Activated CD4-positive, alpha-beta memory T cell treated with anti-CD3 and anti-CD28 coated beads, Interleukin-2, amount 10 ng/mL, durations not matched to agents 7 days and 5 days (primary cell): ENCODE measurements at regions of chr6 and their contacts with region 1.

Region 1: DNA sequence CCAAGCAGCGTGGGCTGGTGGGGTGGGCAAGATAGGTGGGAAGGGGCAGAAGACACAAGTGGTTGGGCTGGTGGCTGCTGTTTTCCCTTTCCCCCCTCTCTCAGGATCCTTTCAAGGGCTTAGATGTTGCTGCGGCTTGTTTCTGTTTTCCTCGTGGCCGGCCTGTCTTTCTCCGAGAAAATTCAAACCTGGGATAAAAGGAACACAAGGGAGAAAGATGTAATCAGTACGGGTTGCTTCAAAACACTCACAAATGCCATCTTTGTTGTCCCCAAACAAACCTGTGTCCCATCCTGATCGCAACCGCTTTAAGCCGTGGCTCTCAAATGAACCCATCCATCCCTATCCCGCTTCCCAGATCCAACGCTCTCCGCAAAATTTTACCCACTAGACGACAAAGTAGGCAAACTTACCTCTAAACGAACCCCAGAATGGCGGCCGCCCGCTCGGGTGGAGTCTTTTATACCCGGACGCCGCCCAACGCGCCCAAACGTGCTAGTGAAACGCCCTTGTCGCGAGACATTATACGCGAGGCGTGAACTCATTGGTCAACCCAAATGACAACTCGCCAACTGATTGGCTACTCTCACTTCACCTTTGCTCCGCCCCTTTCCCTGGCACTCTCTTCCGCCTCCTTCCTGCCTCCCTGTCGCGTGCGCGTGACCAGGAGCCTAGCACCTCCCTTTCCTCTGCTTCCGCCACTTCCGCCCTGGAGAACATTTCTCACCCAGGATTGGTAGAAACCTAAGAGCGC is at the start of gene PPP1R10:
- DNase-seq: peak; percentile 99
- H3K4me3 Mint-ChIP-seq: peak within 1 kb of the TSS; percentile 91
- H3K27ac Mint-ChIP-seq: peak within 1 kb of the TSS; percentile 96
- H3K4me1 Mint-ChIP-seq: peaks cover 45% of the 10 kb centered on the region
- H3K27me3 Mint-ChIP-seq: no peaks in the 10 kb centered on the region
- total RNA-seq, gene PPP1R10: 96.1 to 103 TPM

Region 2: GRCh38 chr6:30360139-30360538 is 256.8 kb before region 1 on chr6:
- CTCF ChIA-PET with region 1: interaction called, 10 read pairs
- POLR2A ChIA-PET with region 1: no interaction called
- DNase-seq: no peak
- H3K4me3 Mint-ChIP-seq: no peak overlapping the region
- H3K27ac Mint-ChIP-seq: no peak overlapping the region
- H3K4me1 Mint-ChIP-seq: peaks cover 6% of the 10 kb centered on the region
- H3K27me3 Mint-ChIP-seq: peaks cover 77% of the 10 kb centered on the region

Region 3: GRCh38 chr6:30465595-30466306 is 151.2 kb before region 1 on chr6:
- CTCF ChIA-PET with region 1: no interaction called
- POLR2A ChIA-PET with region 1: no interaction called
- DNase-seq: no peak
- H3K4me3 Mint-ChIP-seq: no peak overlapping the region
- H3K27ac Mint-ChIP-seq: no peak overlapping the region
- H3K4me1 Mint-ChIP-seq: peaks cover 37% of the 10 kb centered on the region
- H3K27me3 Mint-ChIP-seq: peaks cover 85% of the 10 kb centered on the region

Region 4: DNA sequence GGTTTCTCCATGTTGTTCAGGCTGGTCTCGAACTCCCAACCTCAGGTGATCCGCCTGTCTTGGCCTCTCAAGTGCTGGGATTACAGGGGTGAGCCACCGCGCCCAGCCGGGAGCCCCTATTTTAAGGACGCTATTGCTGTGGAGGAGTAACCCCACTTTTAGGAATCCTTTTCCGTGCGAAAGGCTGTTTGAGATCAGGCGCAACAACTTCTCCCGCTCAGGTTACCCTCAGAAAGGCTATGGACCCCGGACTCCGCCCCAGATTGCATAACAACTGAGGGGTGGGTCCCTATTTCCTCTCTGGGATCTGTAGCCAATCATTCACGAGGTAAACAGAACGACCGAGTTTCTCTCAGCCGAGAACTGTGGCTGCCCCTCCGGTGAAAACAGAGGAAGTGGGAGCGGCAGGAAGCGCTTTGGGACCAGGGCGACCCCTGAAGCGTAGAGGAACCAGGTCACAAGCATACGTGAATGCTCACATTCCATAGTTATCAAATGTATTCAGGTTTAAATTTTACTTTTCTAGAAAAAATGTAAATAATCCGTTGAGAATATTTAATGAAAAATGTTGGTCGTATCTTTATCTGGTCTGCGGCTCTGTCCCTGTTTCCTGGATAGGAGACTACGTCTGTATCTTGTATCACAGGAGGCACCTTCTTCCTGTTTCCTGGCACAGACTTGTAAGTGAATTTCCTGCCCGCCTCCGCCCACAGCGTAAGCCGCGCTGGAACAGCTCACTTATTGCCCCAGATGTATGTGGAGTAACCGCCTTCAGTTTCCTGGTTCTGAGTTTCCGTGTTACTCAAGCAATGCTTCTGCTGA is 100.8 kb before region 1 on chr6:
- CTCF ChIA-PET with region 1: no interaction called
- POLR2A ChIA-PET with region 1: no interaction called
- DNase-seq: peak; percentile 94
- H3K4me3 Mint-ChIP-seq: peak overlapping the region; percentile 66
- H3K27ac Mint-ChIP-seq: peak overlapping the region; percentile 96
- H3K4me1 Mint-ChIP-seq: peaks cover 43% of the 10 kb centered on the region
- H3K27me3 Mint-ChIP-seq: no peaks in the 10 kb centered on the region

Region 5: DNA sequence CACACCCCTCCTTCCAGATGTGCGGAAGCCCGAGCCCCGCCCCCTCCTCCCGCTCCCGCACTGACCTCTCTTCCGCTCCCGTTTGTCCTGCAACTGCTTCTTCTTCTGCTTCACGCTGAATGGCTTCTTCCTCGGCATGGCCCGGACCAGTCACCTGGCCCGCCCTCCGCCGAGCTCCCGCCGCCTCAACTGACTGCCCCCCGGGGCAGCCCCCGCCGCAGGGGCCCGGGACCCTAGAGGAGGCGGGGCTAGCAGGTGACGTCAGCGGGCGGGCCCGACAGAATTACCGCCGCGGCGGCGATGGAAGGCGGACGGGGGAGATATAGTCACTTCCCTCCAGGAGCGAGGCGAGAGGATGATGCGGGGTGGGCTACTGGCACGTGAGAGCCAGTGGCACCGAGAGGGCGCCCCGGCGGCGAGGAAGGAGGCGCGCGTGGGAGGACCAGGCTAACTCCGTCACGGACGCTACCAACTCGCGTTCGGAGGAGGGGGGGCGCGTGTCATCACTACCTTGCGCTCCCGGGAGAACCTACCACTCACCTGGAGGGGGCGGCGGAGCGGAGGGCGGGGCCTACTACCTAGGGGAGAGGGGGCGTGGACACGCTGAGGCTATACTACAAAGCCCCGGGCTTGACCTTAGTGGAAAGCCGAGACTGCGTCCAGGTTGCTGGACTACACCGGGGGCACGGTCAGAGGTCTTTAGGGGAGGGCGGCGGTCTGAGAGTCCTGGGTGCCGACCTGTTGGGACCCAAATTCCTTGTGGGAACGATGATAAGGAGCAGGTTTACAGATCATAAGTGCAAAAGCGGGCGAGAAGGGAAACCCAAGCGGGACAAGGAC is 60.7 kb before region 1 on chr6 and contains the start of gene GNL1:
- CTCF ChIA-PET with region 1: interaction called, 3 read pairs
- POLR2A ChIA-PET with region 1: interaction called, 46 read pairs
- DNase-seq: peak; percentile 98
- H3K4me3 Mint-ChIP-seq: peak within 1 kb of the TSS; percentile 95
- H3K27ac Mint-ChIP-seq: peak within 1 kb of the TSS; percentile 99
- H3K4me1 Mint-ChIP-seq: peaks cover 45% of the 10 kb centered on the region
- H3K27me3 Mint-ChIP-seq: no peaks in the 10 kb centered on the region
- total RNA-seq, gene GNL1: 62.1 to 70.8 TPM

Region 6: DNA sequence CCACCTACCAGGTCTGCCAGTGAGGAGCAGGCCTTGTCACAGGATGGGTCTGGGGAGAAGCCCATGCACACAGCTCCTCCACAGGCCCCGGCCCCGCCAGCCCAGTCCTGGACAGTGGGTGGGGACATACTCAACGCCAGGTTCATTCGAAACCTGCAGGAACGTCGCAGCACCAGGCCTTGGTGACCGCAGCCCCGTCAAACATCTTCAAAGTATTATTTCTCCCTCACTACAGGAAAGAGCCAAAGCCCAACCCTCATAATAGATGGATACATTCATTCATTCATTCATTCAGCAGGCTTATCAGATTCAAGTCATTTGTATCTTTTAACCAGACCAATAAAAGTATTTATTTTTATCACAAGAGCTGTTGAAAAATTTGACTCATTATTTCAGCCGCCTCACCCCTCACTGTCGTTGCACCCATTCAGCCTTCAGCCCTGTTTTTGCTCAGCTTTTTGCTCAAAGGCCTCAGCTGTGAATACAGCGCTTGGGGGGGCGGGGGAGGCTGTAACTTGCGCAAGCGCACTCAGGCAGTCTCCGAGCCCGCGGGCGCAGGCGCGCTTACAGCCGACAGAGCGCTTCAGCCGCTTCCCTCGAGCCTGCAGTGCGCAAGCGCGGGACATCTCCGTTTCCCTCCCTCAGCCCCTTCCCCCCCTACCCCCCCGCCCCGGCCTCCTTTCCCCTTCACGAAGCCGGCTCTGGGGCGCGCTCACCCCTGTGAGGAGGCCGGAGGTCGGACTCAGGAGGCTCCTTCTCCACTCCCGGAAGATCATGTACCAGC is 29.7 kb after region 1 on chr6 and contains the start of gene C6orf136:
- CTCF ChIA-PET with region 1: interaction called, 4 read pairs
- POLR2A ChIA-PET with region 1: interaction called, 18 read pairs
- DNase-seq: peak; percentile 94
- H3K4me3 Mint-ChIP-seq: peak within 1 kb of the TSS; percentile 83
- H3K27ac Mint-ChIP-seq: peak within 1 kb of the TSS; percentile 90
- H3K4me1 Mint-ChIP-seq: peaks cover 27% of the 10 kb centered on the region
- H3K27me3 Mint-ChIP-seq: no peaks in the 10 kb centered on the region
- total RNA-seq, gene C6orf136: 21.7 to 24.4 TPM

Region 7: GRCh38 chr6:30686908-30687658 is 70.1 kb after region 1 on chr6:
- CTCF ChIA-PET with region 1: interaction called, 11 read pairs
- POLR2A ChIA-PET with region 1: interaction called, 65 read pairs
- DNase-seq: peak; percentile 85
- H3K4me3 Mint-ChIP-seq: peak overlapping the region; percentile 93
- H3K27ac Mint-ChIP-seq: peak overlapping the region; percentile 94
- H3K4me1 Mint-ChIP-seq: peaks cover 42% of the 10 kb centered on the region
- H3K27me3 Mint-ChIP-seq: no peaks in the 10 kb centered on the region

Region 8: GRCh38 chr6:30730601-30731435 is 113.8 kb after region 1 on chr6:
- CTCF ChIA-PET with region 1: interaction called, 37 read pairs
- POLR2A ChIA-PET with region 1: interaction called, 10 read pairs
- DNase-seq: peak; percentile 90
- H3K4me3 Mint-ChIP-seq: peak overlapping the region; percentile 35
- H3K27ac Mint-ChIP-seq: peak overlapping the region; percentile 55
- H3K4me1 Mint-ChIP-seq: peaks cover 44% of the 10 kb centered on the region
- H3K27me3 Mint-ChIP-seq: no peaks in the 10 kb centered on the region

Region 9: GRCh38 chr6:30877419-30878371 is 260.7 kb after region 1 on chr6:
- CTCF ChIA-PET with region 1: no interaction called
- POLR2A ChIA-PET with region 1: no interaction called
- DNase-seq: peak; percentile 77
- H3K4me3 Mint-ChIP-seq: peak overlapping the region; percentile 49
- H3K27ac Mint-ChIP-seq: no peak overlapping the region
- H3K4me1 Mint-ChIP-seq: peaks cover 11% of the 10 kb centered on the region
- H3K27me3 Mint-ChIP-seq: peaks cover 8% of the 10 kb centered on the region